Vagina (tissue), 2 donors: ENCODE measurements at regions of chr6 and their contacts with region 1.

Region 1: GRCh38 chr6:129498950-129499842 is 210.8 kb downstream of the ARHGAP18 start:
- DNase-seq: no peak
- H3K4me3 ChIP-seq: no peak overlapping the region
- H3K27ac ChIP-seq: peak overlapping the region; percentile 46
- H3K4me1 ChIP-seq: peaks cover 34% of the 10 kb centered on the region
- H3K27me3 ChIP-seq: no peaks in the 10 kb centered on the region
- CTCF ChIP-seq: peak; percentile 32 to 62 (median 36)
- POLR2A ChIP-seq: no peak

Region 2: DNA sequence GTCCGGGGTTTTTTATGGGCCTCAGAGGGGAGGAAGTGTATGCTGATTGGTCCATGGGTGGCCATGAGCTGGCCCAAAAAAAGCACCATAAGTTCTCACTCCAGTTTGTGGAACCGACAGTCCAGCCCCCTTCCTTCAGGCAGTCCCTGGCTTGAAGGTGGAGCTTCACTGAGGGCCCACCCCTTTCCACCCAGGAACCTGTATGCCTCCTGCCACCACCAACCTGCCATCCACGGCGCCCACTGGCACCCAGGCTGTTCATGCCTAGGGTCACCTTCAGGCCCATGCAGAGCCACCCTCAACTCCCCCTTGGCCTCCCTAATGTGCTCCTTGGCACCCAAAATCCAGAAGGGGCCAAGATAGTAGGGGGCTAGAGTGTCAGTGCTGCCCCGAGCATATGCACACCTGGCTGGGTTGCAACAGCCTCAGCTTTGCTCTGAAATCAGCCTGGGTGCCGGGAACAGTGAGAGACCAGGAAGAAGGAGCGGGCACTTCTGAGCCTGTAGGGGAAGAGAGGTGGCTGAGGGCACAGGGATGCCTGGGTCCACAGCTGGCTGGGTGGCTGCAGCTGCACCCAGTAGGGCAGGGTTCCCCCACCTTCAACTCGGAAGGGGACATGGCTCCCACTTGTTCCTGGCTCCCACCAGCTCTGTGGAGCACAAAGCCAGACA is 81.6 kb before region 1 on chr6:
- intact Hi-C with region 1: no loop called
- DNase-seq: no peak
- H3K4me3 ChIP-seq: no peak overlapping the region
- H3K27ac ChIP-seq: no peak overlapping the region
- H3K4me1 ChIP-seq: no peaks in the 10 kb centered on the region
- H3K27me3 ChIP-seq: no peaks in the 10 kb centered on the region
- CTCF ChIP-seq: no peak
- POLR2A ChIP-seq: no peak

Region 3: DNA sequence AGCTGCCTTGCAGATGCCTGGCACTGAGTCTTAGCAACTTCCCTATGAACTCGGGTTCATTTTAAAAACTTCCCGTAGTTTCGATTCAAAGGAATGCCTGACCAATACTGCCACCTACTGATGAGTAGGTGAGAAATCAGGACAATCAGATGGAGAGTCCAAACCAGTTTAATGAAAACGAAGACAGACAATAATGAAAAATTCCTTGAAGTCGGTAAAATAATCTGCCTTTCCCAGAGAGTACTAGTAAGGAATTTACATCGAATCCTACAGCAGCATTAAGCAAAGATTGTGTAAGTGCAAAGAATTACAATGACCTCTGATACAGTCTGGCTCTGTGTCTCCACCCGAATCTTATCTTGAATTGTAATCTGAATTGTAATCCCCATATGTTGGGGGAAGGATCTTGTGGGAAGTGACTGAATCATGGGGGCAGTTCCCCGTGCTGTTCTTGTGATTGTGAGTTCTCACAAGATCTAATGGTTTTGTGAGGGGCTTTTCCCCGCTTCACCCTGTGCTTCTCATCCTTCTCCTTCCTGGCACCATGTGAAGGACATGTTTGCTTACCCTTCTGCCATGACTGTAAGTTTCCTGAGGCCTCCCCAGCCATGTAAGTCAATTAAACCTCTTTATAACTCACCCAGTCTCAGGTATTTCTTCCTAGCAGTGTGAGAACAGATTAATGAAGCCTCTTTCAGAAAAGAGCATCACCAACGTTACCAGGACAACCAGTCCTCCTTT is 76.4 kb after region 1 on chr6:
- intact Hi-C with region 1: loop called (anchors 5 kb)
- DNase-seq: no peak
- H3K4me3 ChIP-seq: no peak overlapping the region
- H3K27ac ChIP-seq: no peak overlapping the region
- H3K4me1 ChIP-seq: no peaks in the 10 kb centered on the region
- H3K27me3 ChIP-seq: no peaks in the 10 kb centered on the region
- CTCF ChIP-seq: peak in 2 of 3 experiments; percentile 46 to 65
- POLR2A ChIP-seq: no peak